CD14-positive monocyte (primary cell): ENCODE measurements at regions of chr19 and their contacts with region 1.

Region 1: DNA sequence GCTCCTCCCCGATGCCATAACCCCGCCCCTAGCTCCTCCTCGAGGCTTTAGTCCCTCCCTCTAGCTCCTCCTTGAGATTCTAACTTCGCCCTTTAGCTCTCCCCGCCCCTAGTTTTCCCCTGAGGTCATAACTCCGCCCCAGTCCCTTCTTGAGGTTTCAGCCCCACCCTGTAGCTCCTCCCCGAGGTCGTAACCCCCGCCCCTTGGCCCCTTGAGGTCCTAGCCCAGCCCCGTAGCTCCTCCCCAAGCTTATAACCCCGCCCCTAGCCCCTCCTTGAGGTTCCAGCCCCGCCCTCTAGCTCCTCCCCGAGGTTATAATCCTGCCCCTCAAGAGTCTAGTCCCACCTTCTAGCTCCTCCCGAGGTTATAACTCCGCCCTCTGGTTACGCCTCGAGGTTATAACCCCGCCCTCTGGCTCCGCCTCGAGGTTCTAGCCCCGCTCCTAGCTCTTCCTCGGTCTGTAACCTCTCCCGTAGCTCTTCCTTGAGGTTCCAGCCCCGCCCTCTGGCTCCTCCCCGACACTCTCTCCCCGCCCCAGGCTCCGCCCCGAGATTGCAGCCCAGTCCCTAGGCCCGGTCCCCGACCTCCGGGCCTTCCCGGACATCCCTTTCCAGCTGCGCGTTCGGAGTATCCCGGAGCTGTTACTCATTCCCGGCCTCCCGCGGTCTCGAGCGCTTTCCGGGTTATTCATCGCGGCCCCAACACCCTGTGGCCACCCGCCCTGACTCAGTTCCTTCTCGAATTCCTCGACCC is 1.4 kb downstream of the PLAUR start:
- DNase-seq: peak; percentile 98 to 99 (median 98)
- H3K4me3 ChIP-seq: peak overlapping the region; percentile 68 to 99 (median 83)
- H3K4me3 Mint-ChIP-seq: peak overlapping the region; percentile 100
- H3K27ac ChIP-seq: peak overlapping the region; percentile 82 to 90
- H3K27ac Mint-ChIP-seq: peak overlapping the region; percentile 99 to 100 (median 99)
- H3K4me1 ChIP-seq: peaks cover 68 to 81% of the 10 kb centered on the region in 2 donors
- H3K4me1 Mint-ChIP-seq: peaks cover 66% of the 10 kb centered on the region
- H3K27me3 ChIP-seq: no peaks in the 10 kb centered on the region
- H3K27me3 Mint-ChIP-seq: peaks cover 0 to 2% (median 2%) of the 10 kb centered on the region in 3 donors
- CTCF ChIP-seq: no peak

Region 2: DNA sequence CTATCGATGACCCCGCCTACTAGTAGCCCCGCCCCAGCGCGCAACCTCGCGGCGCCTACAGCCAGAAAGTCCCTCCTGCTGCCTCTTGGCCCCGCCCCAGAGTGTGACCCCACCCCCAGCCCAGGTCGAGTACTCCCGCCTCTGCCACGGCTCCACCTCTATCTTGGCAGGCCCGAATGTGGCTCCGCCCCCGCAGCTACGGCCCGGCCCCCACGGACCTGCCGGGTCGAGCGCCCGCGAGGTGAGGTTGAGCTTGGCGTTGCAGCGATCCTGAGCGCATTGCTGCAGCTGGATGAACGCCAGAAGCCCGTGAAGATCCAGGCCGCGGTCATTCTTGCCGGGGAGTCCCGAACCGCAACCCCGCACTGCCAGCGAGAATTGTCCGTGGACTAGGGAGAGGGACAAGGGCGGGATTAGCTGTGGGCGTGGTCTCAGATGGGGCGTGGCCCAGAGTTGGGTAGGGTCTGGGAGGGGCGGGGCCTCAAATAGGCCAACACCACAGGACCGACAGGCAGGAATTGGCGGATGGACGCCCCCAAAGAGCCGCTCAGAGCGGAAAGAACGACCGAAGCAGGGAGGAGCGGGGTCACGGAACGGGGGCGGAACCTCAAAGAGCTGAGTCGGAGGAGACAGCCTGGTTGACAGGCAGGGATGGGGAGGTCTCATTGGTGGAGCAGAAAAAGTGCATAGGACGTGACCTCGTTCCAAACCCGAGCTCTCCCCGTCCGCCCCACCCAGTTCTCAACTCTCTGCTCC is 205.0 kb before region 1 on chr19:
- intact Hi-C with region 1: no loop called
- DNase-seq: peak; percentile 93 to 96 (median 95)
- H3K4me3 ChIP-seq: peak overlapping the region; percentile 68 to 88 (median 80)
- H3K4me3 Mint-ChIP-seq: peak overlapping the region; percentile 94 to 97
- H3K27ac ChIP-seq: peak overlapping the region; percentile 70 to 90
- H3K27ac Mint-ChIP-seq: peak overlapping the region; percentile 94 to 99 (median 98)
- H3K4me1 ChIP-seq: peaks cover 45 to 50% of the 10 kb centered on the region in 2 donors
- H3K4me1 Mint-ChIP-seq: peaks cover 42% of the 10 kb centered on the region
- H3K27me3 ChIP-seq: no peaks in the 10 kb centered on the region
- H3K27me3 Mint-ChIP-seq: peaks cover 10 to 24% (median 15%) of the 10 kb centered on the region in 3 donors
- CTCF ChIP-seq: no peak

Region 3: GRCh38 chr19:43692877-43693276 is 24.3 kb after region 1 on chr19:
- intact Hi-C with region 1: loop called in 1 of 2 experiments (anchors 2 kb)
- DNase-seq: peak; percentile 82 to 95 (median 93)
- H3K4me3 ChIP-seq: peak overlapping the region in 2 of 3 experiments; percentile 0 to 62
- H3K4me3 Mint-ChIP-seq: peak overlapping the region; percentile 67 to 77
- H3K27ac ChIP-seq: peak overlapping the region; percentile 95 to 96
- H3K27ac Mint-ChIP-seq: peak overlapping the region; percentile 99 to 100 (median 99)
- H3K4me1 ChIP-seq: peaks cover 62 to 77% of the 10 kb centered on the region in 2 donors
- H3K4me1 Mint-ChIP-seq: peaks cover 70% of the 10 kb centered on the region
- H3K27me3 ChIP-seq: no peaks in the 10 kb centered on the region
- H3K27me3 Mint-ChIP-seq: peaks cover 0 to 10% (median 5%) of the 10 kb centered on the region in 3 donors
- CTCF ChIP-seq: no peak

Region 4: DNA sequence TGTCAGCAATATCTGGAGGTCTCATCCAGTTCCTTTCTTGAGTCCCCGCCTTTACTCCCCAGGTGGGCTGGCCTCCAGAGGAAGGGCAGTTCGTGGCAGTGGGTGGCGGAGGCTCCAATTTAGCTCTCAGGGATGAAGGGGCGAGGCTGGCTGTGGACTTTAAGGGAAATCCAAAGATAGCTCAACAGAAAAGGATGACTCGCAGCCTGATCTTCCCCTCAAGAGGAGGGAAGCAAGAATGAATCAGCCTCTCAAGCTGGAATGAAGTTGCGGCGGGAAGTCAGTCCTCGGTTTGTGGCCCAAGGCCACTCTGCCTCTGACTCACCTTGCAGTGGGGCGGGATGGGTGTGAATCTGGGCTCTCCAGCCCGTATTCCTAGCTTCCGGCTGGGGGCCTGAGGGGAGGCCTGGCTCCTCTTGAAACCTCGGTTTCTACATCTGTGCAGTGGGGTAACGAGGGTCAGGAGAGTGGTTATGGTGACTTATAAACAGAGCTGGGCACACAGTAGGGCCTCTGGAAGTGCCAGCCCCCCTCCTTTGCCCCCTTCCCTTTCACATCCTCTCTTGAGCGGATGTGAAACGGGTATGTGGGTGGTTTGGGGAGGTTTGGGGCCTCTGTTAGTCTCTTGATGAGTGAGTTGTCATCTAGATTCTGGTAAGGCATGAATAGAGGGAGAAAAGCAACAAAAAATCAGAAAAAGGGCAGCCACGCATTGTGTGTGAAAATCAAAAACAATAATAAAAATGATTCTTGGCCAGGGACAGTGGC is 96.7 kb after region 1 on chr19:
- intact Hi-C with region 1: loop called in 1 of 2 experiments (anchors 5 kb)
- DNase-seq: peak; percentile 89 to 97 (median 96)
- H3K4me3 ChIP-seq: peak overlapping the region in 1 of 3 experiments; percentile 28
- H3K4me3 Mint-ChIP-seq: peak overlapping the region; percentile 16 to 69
- H3K27ac ChIP-seq: peak overlapping the region; percentile 65 to 81
- H3K27ac Mint-ChIP-seq: peak overlapping the region; percentile 90 to 98 (median 93)
- H3K4me1 ChIP-seq: peaks cover 70 to 73% of the 10 kb centered on the region in 2 donors
- H3K4me1 Mint-ChIP-seq: peaks cover 77% of the 10 kb centered on the region
- H3K27me3 ChIP-seq: no peaks in the 10 kb centered on the region
- H3K27me3 Mint-ChIP-seq: peaks cover 0 to 1% (median 0%) of the 10 kb centered on the region in 3 donors
- CTCF ChIP-seq: no peak

Region 5: DNA sequence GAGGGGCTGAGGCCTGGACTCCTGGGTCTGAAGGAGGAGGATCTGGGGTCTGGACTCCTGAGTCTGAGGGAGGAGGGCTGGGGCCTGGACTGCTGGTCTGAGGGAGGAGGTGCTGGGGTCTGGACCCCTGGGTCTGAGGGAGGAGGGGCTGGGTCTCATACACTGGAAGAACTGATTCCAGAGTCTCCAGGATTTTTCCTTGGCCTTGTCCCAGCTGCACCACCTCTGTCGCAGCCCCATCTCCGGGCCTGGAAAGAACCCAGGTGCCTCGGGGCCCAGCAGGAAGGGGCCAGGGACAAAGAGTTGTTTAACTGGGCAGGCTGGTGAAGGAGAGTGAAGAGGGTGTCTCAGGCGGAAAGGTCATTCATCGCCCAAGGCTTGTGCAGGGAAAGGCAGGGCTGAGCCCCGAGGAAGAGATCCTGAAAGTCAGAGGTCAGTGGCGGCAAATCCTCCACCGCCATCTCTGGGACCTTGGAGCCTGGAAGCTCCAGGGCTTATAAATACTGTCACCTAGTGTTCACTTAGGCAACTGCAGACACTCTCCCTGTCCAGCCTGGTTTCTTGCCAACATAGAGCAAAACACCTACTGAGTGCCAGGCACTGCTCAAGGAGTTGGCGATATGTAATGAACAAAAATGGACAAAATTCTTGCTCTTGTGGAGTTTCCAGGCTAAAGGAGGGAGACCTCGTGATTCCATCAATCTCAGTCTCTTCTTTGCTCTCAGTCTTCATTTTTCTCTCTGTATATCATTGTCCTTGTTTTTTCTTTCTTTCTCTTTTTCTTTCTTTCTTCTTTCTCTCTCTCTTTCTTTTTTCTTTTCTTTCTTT is 116.6 kb after region 1 on chr19:
- intact Hi-C with region 1: loop called (anchors 2 to 10 kb)
- DNase-seq: peak; percentile 71 to 89 (median 81)
- H3K4me3 ChIP-seq: peak overlapping the region in 1 of 3 experiments; percentile 55
- H3K4me3 Mint-ChIP-seq: peak overlapping the region; percentile 27 to 82
- H3K27ac ChIP-seq: peak overlapping the region; percentile 14 to 83
- H3K27ac Mint-ChIP-seq: peak overlapping the region; percentile 26 to 95 (median 81)
- H3K4me1 ChIP-seq: peaks cover 27 to 44% of the 10 kb centered on the region in 2 donors
- H3K4me1 Mint-ChIP-seq: peaks cover 44% of the 10 kb centered on the region
- H3K27me3 ChIP-seq: no peaks in the 10 kb centered on the region
- H3K27me3 Mint-ChIP-seq: peaks cover 0 to 5% (median 3%) of the 10 kb centered on the region in 3 donors
- CTCF ChIP-seq: peak; percentile 99